ENCODE measurements at regions of chr9 and their contacts with region 1.

Region 1: DNA sequence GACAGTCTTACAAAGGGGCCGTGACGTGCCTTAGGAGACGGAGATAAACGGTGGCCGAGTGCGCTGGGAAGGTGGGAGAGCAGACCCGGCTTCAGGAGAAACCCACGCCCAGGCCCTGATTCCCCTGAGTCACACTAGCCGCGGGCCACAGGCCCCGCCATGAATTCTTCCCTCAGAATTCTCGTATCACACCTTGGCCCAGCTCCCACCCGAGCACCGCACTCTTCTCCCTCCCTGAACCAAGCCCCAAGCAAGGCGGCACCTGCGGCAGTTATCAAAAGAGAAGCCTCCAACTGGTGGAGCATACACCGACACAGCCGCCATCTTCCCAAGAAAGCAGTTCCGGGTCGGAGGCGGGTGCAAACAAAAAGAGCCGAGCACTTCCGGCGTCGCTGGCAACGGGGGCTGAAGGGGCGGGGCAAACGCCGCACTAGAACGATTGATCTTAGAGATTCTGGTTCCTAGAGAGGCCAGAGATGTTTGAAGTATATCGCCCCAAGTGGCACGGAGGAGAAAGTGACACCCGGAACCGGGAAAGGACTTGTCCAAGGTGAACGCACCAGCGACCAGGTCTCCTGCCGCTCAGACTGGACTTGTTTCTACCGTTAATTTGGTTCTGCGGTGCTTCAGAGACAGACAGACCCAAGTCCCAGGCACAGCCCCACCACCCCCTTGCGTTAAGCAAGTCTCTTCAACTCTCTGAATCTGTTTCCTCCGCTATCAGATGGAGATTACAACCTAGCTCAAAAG is at the start of gene PSMB7:
- DNase-seq: peak; percentile 95 to 99 (median 98)
- ATAC-seq: peak; percentile 91
- H3K4me3 ChIP-seq: peak within 1 kb of the TSS; percentile 91
- H3K4me3 Mint-ChIP-seq: peak within 1 kb of the TSS; percentile 94
- H3K27ac ChIP-seq: peak within 1 kb of the TSS in 1 of 2 donors; percentile 72
- H3K27ac Mint-ChIP-seq: peak within 1 kb of the TSS; percentile 86
- H3K4me1 ChIP-seq: peaks cover 23% of the 10 kb centered on the region
- H3K4me1 Mint-ChIP-seq: peaks cover 28% of the 10 kb centered on the region
- H3K27me3 ChIP-seq: no peaks in the 10 kb centered on the region
- H3K27me3 Mint-ChIP-seq: no peaks in the 10 kb centered on the region
- CTCF ChIP-seq: peak; percentile 89
- total RNA-seq, gene PSMB7: 69.3 to 71.7 TPM

Region 2: DNA sequence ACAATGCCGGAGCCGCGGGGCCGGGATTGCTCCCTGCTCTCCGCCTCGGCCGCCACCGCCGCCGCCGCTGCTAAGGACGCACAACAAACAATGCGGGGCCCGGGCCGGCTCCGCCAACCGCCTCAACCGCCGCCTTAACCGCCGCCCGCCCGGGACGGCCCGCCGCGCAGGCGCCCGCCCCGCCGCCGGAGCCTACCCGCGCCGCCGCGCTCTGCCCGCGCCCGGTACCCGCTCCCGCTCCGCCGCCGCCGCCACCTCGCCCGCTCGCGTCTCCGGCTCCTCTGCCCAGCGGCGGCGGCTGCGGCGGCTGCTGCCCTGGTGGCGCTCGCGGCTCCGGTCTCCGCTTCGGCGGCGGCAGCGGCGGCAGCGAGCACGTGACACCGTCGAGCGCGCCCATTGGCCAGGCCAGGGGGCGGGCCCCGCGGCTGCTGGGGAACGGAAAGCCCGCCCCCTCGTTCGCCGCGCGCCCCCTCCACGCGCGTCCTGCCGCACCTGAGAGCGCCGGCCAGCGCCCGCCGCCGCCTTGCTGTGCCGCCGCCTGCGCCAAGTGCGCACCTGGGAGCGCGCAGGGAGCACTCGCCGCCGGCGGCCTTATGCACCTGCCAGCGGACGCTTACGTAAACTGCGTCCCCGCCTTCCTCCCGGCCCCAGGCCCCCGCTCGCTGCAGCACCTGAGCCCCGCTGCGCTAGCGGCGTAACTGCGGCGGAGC is 1146.9 kb before region 1 on chr9 and contains the start of gene STRBP:
- CTCF ChIA-PET with region 1: no interaction called
- POLR2A ChIA-PET with region 1: no interaction called
- intact Hi-C with region 1: loop called in 1 of 2 experiments (anchors 5 kb)
- DNase-seq: peak; percentile 85 to 98 (median 94)
- ATAC-seq: peak; percentile 88
- H3K4me3 ChIP-seq: peak within 1 kb of the TSS; percentile 76
- H3K4me3 Mint-ChIP-seq: peak within 1 kb of the TSS; percentile 89
- H3K27ac ChIP-seq: peak within 1 kb of the TSS; percentile 62 to 84
- H3K27ac Mint-ChIP-seq: peak within 1 kb of the TSS; percentile 73
- H3K4me1 ChIP-seq: peaks cover 30% of the 10 kb centered on the region
- H3K4me1 Mint-ChIP-seq: peaks cover 35% of the 10 kb centered on the region
- H3K27me3 ChIP-seq: no peaks in the 10 kb centered on the region
- H3K27me3 Mint-ChIP-seq: no peaks in the 10 kb centered on the region
- CTCF ChIP-seq: no peak
- total RNA-seq, gene STRBP: 10.9 to 12.0 TPM

Region 3: DNA sequence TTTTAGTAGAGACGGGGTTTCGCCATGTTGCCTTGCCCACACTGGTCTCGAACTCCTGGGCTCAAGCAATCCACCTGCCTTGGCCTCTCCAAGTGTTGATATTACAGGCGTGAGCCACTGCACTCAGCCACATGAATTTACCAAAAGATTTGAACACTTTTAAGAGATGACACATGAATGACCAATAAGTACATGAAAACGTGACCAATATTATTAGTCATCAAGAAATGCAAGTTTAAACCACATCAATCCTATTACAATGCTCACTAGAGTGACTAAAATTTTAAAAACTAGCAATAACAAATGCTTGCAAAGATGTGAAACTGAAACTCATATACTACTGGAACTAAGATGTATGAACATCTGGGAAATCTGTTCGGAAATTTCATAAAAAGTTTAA is 301.5 kb after region 1 on chr9:
- CTCF ChIA-PET with region 1: no interaction called
- POLR2A ChIA-PET with region 1: no interaction called
- intact Hi-C with region 1: loop called in 1 of 2 experiments (anchors 10 kb)
- DNase-seq: no peak
- ATAC-seq: no peak
- H3K4me3 ChIP-seq: no peak overlapping the region
- H3K4me3 Mint-ChIP-seq: no peak overlapping the region
- H3K27ac ChIP-seq: no peak overlapping the region
- H3K27ac Mint-ChIP-seq: no peak overlapping the region
- H3K4me1 ChIP-seq: no peaks in the 10 kb centered on the region
- H3K4me1 Mint-ChIP-seq: no peaks in the 10 kb centered on the region
- H3K27me3 ChIP-seq: no peaks in the 10 kb centered on the region
- H3K27me3 Mint-ChIP-seq: peaks cover 14% of the 10 kb centered on the region
- CTCF ChIP-seq: no peak

Region 4: DNA sequence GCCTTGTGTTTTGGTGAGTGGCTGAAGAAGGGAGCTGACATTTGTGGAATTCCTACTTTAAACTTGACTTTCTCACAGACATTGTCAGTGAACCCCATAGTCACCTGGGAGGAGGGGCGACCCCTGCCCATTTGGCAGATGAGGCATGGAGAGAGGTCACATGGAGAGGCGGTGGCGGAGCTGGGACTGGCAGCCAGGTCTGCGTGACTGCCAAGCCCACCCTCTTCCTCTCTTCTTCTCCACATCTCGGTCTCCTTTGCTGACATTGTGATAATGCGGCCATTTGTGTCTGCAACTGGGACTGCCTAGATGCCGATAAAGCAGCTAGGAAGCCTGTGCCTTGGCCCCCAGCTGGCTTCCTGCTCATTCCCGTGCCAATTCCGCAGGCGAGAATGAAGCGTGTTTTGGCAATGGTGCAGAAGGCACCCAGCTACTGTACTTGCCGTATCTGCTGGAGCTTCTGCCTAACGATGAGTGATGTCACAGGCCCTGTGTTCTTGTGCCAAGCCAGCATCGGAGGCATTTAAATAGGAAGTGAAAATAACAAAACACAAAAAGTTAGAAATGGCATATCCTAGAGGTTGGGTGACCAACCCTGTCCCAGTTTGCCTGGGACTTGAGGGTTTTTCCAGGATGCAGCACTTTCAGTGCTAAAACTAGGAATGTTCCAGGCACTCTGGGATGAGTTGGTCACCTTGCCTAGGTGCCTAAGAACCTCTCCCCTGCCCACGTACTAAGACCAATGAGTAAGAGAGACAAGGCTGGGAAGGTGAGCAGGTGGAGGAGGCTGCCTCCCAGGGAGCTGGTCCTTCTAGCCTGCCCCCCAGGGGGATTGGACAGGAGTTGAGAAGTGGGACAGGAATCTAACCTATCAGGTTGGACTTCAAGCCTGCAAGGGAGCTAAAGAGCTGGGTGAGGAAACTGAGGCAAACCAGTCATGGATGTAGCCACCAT is 385.3 kb after region 1 on chr9:
- CTCF ChIA-PET with region 1: no interaction called
- POLR2A ChIA-PET with region 1: no interaction called
- intact Hi-C with region 1: no loop called
- DNase-seq: peak in 3 of 14 experiments; percentile 7 to 46 (median 45)
- ATAC-seq: no peak
- H3K4me3 ChIP-seq: no peak overlapping the region
- H3K4me3 Mint-ChIP-seq: no peak overlapping the region
- H3K27ac ChIP-seq: no peak overlapping the region
- H3K27ac Mint-ChIP-seq: no peak overlapping the region
- H3K4me1 ChIP-seq: no peaks in the 10 kb centered on the region
- H3K4me1 Mint-ChIP-seq: no peaks in the 10 kb centered on the region
- H3K27me3 ChIP-seq: peaks cover 0 to 2% of the 10 kb centered on the region in 2 experiments
- H3K27me3 Mint-ChIP-seq: peaks cover 17% of the 10 kb centered on the region
- CTCF ChIP-seq: no peak

Region 5: DNA sequence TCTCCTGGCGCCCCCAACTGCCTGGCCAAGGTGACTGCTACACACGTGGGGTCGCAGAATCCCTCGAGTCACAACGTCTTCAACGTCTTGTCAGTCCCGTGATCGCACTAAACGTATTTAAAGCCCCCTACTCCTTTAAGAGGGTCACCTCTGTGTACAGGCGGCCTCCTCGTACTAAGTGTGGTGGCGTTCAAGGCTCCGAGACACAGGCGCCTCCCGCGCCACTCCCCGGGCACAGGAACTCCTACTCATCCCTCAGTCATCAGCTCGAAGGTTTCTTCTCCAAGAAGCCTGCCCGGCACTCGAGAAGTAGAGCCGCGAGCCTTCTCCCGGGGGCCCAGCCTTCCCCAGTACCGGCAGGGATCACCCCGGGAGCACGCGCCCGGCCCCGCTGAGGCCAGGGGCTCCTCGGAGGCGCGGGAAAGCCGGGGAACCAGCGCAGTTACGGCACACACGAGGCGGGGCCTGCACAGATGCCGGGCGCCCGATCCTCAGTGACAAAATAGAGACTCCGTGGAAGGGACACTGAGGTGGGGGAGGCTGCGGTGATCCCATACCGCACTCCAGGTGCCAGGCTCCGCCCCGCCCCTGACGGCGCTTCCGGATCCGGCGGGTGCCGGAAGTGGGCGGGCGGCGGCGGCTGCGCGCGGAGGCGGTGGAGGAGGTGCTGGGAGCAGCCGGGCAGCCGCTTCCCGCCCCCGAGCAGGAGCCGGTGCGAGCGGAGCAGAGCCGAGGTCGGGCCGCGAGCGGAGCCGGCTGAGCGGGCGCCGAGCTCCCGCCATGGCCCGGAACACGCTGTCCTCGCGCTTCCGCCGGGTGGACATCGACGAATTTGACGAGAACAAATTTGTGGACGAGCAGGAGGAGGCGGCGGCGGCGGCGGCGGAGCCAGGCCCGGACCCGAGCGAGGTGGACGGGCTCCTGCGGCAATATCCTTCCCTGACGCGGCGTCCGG is 453.5 kb after region 1 on chr9:
- CTCF ChIA-PET with region 1: no interaction called
- POLR2A ChIA-PET with region 1: interaction called, 3 read pairs
- intact Hi-C with region 1: loop called in 1 of 2 experiments (anchors 2 kb)
- DNase-seq: peak; percentile 76 to 95 (median 87)
- ATAC-seq: peak; percentile 75
- H3K4me3 ChIP-seq: peak overlapping the region; percentile 84
- H3K4me3 Mint-ChIP-seq: peak overlapping the region; percentile 92
- H3K27ac ChIP-seq: peak overlapping the region; percentile 93 to 96
- H3K27ac Mint-ChIP-seq: peak overlapping the region; percentile 92
- H3K4me1 ChIP-seq: peaks cover 58% of the 10 kb centered on the region
- H3K4me1 Mint-ChIP-seq: peaks cover 56% of the 10 kb centered on the region
- H3K27me3 ChIP-seq: no peaks in the 10 kb centered on the region
- H3K27me3 Mint-ChIP-seq: no peaks in the 10 kb centered on the region
- CTCF ChIP-seq: no peak

Region 6: DNA sequence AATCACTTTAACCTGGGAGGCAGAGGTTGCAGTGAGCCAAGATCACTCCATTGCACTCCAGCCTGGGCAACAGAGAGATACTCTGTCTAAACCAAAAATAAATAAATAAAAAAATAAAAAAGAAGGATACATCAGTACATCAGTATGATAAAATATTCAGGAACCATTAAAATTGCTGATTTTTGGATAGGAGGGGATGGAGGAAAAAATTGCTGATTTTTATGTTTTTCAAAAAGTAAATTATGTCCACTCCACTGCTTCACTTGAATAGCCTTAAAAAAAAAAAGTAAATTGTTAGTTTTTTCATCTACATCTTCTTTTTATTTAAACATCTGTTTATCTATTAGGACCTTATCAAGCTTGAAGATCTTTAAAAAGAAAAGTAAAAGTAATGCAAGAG is 839.0 kb after region 1 on chr9:
- CTCF ChIA-PET with region 1: no interaction called
- POLR2A ChIA-PET with region 1: no interaction called
- intact Hi-C with region 1: no loop called
- DNase-seq: no peak
- ATAC-seq: no peak
- H3K4me3 ChIP-seq: no peak overlapping the region
- H3K4me3 Mint-ChIP-seq: no peak overlapping the region
- H3K27ac ChIP-seq: no peak overlapping the region
- H3K27ac Mint-ChIP-seq: no peak overlapping the region
- H3K4me1 ChIP-seq: no peaks in the 10 kb centered on the region
- H3K4me1 Mint-ChIP-seq: no peaks in the 10 kb centered on the region
- H3K27me3 ChIP-seq: no peaks in the 10 kb centered on the region
- H3K27me3 Mint-ChIP-seq: no peaks in the 10 kb centered on the region
- CTCF ChIP-seq: no peak

Region 7: GRCh38 chr9:125746017-125746773 is 1330.9 kb after region 1 on chr9:
- CTCF ChIA-PET with region 1: no interaction called
- POLR2A ChIA-PET with region 1: no interaction called
- intact Hi-C with region 1: loop called in 1 of 2 experiments (anchors 10 kb)
- DNase-seq: peak; percentile 78 to 96 (median 90)
- ATAC-seq: peak; percentile 83
- H3K4me3 ChIP-seq: peak overlapping the region; percentile 90
- H3K4me3 Mint-ChIP-seq: peak overlapping the region; percentile 100
- H3K27ac ChIP-seq: peak overlapping the region; percentile 56 to 63
- H3K27ac Mint-ChIP-seq: peak overlapping the region; percentile 91
- H3K4me1 ChIP-seq: peaks cover 15% of the 10 kb centered on the region
- H3K4me1 Mint-ChIP-seq: peaks cover 37% of the 10 kb centered on the region
- H3K27me3 ChIP-seq: no peaks in the 10 kb centered on the region
- H3K27me3 Mint-ChIP-seq: no peaks in the 10 kb centered on the region
- CTCF ChIP-seq: no peak

Measured in CD4-positive, alpha-beta T cell (primary cell).